CD4-positive, alpha-beta T cell (primary cell): ENCODE measurements at regions of chr15 and their contacts with region 1.

Region 1: GRCh38 chr15:28132524-28133275 is 33.6 kb upstream of the OCA2 start:
- DNase-seq: no peak
- ATAC-seq: no peak
- H3K4me3 ChIP-seq: no peak overlapping the region
- H3K4me3 Mint-ChIP-seq: no peak overlapping the region
- H3K27ac ChIP-seq: no peak overlapping the region
- H3K27ac Mint-ChIP-seq: no peak overlapping the region
- H3K4me1 ChIP-seq: peaks cover 80% of the 10 kb centered on the region
- H3K4me1 Mint-ChIP-seq: peaks cover 49% of the 10 kb centered on the region
- H3K27me3 ChIP-seq: no peaks in the 10 kb centered on the region
- H3K27me3 Mint-ChIP-seq: no peaks in the 10 kb centered on the region
- CTCF ChIP-seq: no peak

Region 2: GRCh38 chr15:28098766-28099554 is 33.7 kb before region 1 on chr15 and contains the start of gene OCA2:
- CTCF ChIA-PET with region 1: no interaction called
- POLR2A ChIA-PET with region 1: interaction called, 3 read pairs
- intact Hi-C with region 1: loop called in 1 of 2 experiments (anchors 5 kb)
- DNase-seq: peak; percentile 31 to 81 (median 53)
- ATAC-seq: peak; percentile 24
- H3K4me3 ChIP-seq: peak within 1 kb of the TSS; percentile 4
- H3K4me3 Mint-ChIP-seq: peak within 1 kb of the TSS; percentile 87
- H3K27ac ChIP-seq: no peak within 1 kb of the TSS
- H3K27ac Mint-ChIP-seq: no peak within 1 kb of the TSS
- H3K4me1 ChIP-seq: peaks cover 56% of the 10 kb centered on the region
- H3K4me1 Mint-ChIP-seq: peaks cover 37% of the 10 kb centered on the region
- H3K27me3 ChIP-seq: peaks cover 65 to 66% of the 10 kb centered on the region in 2 experiments
- H3K27me3 Mint-ChIP-seq: peaks cover 61% of the 10 kb centered on the region
- CTCF ChIP-seq: peak; percentile 38
- total RNA-seq, gene OCA2: not detected

Region 3: GRCh38 chr15:28147801-28148200 is 15.1 kb after region 1 on chr15:
- CTCF ChIA-PET with region 1: no interaction called
- POLR2A ChIA-PET with region 1: no interaction called
- intact Hi-C with region 1: loop called in 1 of 2 experiments (anchors 2 kb)
- DNase-seq: no peak
- ATAC-seq: no peak
- H3K4me3 ChIP-seq: no peak overlapping the region
- H3K4me3 Mint-ChIP-seq: no peak overlapping the region
- H3K27ac ChIP-seq: no peak overlapping the region
- H3K27ac Mint-ChIP-seq: no peak overlapping the region
- H3K4me1 ChIP-seq: peaks cover 55% of the 10 kb centered on the region
- H3K4me1 Mint-ChIP-seq: peaks cover 7% of the 10 kb centered on the region
- H3K27me3 ChIP-seq: no peaks in the 10 kb centered on the region
- H3K27me3 Mint-ChIP-seq: no peaks in the 10 kb centered on the region
- CTCF ChIP-seq: no peak

Region 4: DNA sequence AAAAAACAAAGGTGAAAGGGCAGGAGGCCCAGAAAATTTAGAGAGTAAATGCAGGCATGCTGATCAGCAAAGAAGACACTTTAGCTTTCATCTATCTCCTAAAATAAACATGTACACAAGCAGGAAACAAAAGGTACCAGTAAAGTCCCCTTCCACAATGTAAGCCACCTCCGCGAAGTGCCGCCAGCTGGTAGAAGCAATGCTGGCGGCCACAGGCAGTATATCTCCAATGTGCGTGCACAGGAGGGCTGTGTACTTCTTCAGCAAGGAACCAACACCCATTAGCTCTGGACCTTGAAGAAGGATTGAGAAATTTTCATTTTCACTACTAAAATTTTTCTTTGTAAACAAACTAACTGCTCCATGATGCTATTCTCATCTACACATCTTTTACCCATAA is 113.9 kb after region 1 on chr15:
- CTCF ChIA-PET with region 1: no interaction called
- POLR2A ChIA-PET with region 1: no interaction called
- intact Hi-C with region 1: no loop called
- DNase-seq: no peak
- ATAC-seq: no peak
- H3K4me3 ChIP-seq: no peak overlapping the region
- H3K4me3 Mint-ChIP-seq: no peak overlapping the region
- H3K27ac ChIP-seq: no peak overlapping the region
- H3K27ac Mint-ChIP-seq: no peak overlapping the region
- H3K4me1 ChIP-seq: no peaks in the 10 kb centered on the region
- H3K4me1 Mint-ChIP-seq: no peaks in the 10 kb centered on the region
- H3K27me3 ChIP-seq: no peaks in the 10 kb centered on the region
- H3K27me3 Mint-ChIP-seq: no peaks in the 10 kb centered on the region
- CTCF ChIP-seq: no peak